H1 (cell line): ENCODE measurements at regions of chr17 and their contacts with region 1.

Region 1: DNA sequence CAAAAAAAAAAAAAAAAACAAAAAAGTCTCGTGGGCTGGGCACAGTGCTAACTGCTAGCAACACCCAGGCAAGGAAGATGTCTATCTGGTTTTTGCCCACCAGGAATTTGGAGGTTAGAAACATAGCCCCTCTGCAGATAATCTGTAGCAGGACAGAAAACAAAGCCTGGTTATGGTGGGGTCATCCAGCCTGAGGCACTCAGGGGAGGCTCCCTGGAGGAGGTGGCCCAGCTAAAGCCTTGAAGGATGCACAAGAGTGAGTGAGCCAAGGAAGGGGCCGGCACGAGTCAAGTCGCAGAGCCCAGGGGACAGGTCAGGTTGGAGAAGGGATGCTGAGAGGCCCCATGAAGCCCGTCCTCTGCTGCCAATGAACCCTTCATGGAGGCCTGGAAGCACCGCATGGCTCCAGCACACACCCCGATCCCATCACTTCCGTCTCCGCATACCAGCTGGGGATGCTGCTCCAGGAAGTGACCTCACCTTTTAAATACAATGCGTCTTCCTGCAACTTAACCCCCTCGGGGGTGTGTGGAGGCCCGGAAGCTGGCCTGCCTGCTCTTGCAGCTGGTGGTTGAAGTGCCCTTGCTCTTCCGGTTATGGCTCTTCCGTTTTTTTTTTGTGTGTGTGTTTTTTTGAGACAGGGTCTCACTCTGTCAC is 86.5 kb downstream of the ENGASE start:
- DNase-seq: no peak
- H3K4me3 ChIP-seq: no peak overlapping the region
- H3K27ac ChIP-seq: no peak overlapping the region
- H3K4me1 ChIP-seq: peaks cover 0 to 7% (median 1%) of the 10 kb centered on the region in 4 experiments; a peak in 3 of 7 replicates
- H3K27me3 ChIP-seq: no peaks in the 10 kb centered on the region
- CTCF ChIP-seq: no peak
- EP300 ChIP-seq: no peak
- POLR2A ChIP-seq: no peak
- RAD21 ChIP-seq: no peak

Region 2: GRCh38 chr17:79126139-79126538 is 35.0 kb before region 1 on chr17:
- CTCF ChIA-PET with region 1: interaction called, 12 read pairs
- POLR2A ChIA-PET with region 1: no interaction called
- DNase-seq: peak in 1 of 2 experiments; percentile 69
- H3K4me3 ChIP-seq: no peak overlapping the region
- H3K27ac ChIP-seq: no peak overlapping the region
- H3K4me1 ChIP-seq: no peaks in the 10 kb centered on the region
- H3K27me3 ChIP-seq: no peaks in the 10 kb centered on the region
- CTCF ChIP-seq: peak; percentile 57 to 79 (median 68)
- EP300 ChIP-seq: no peak
- POLR2A ChIP-seq: no peak
- RAD21 ChIP-seq: peak; percentile 64 to 74